CD4-positive, alpha-beta memory T cell (primary cell): ENCODE measurements at regions of chr10 and their contacts with region 1.

Region 1: GRCh38 chr10:32378363-32379317 is 31.7 kb upstream of the EPC1 start:
- DNase-seq: peak; percentile 88 to 97 (median 91)
- H3K4me3 ChIP-seq: peak overlapping the region; percentile 74 to 99
- H3K4me3 Mint-ChIP-seq: no peak overlapping the region
- H3K27ac ChIP-seq: peak overlapping the region; percentile 73
- H3K27ac Mint-ChIP-seq: no peak overlapping the region
- H3K4me1 ChIP-seq: peaks cover 34% of the 10 kb centered on the region
- H3K4me1 Mint-ChIP-seq: peaks cover 17 to 24% (median 19%) of the 10 kb centered on the region in 4 donors
- H3K27me3 ChIP-seq: no peaks in the 10 kb centered on the region
- H3K27me3 Mint-ChIP-seq: no peaks in the 10 kb centered on the region

Region 2: DNA sequence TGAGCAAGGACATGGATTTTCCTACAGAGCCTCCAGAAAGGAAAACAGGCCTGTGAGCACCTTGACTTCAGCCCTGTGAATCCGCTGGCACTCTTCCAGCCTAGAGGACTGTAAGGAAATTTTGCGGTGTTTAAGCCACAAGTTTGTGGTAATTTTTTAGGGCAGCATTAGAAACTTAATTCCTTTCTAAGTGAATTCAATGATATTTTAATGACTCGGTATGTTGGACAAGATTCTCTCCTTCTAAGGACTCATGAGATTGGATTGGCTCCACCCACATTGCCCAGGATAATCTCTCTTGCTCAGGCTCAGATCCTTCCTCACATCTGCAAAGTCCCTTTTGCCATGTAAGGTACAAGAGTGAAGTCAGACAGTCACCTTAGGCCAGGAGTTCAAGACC is 1753.6 kb before region 1 on chr10:
- CTCF ChIA-PET with region 1: no interaction called
- POLR2A ChIA-PET with region 1: no interaction called
- intact Hi-C with region 1: no loop called
- DNase-seq: no peak
- H3K4me3 ChIP-seq: no peak overlapping the region
- H3K4me3 Mint-ChIP-seq: no peak overlapping the region
- H3K27ac ChIP-seq: no peak overlapping the region
- H3K27ac Mint-ChIP-seq: no peak overlapping the region
- H3K4me1 ChIP-seq: no peaks in the 10 kb centered on the region
- H3K4me1 Mint-ChIP-seq: no peaks in the 10 kb centered on the region
- H3K27me3 ChIP-seq: no peaks in the 10 kb centered on the region
- H3K27me3 Mint-ChIP-seq: peaks cover 2 to 4% of the 10 kb centered on the region in 2 donors

Region 3: GRCh38 chr10:31759799-31760626 is 618.6 kb before region 1 on chr10:
- CTCF ChIA-PET with region 1: no interaction called
- POLR2A ChIA-PET with region 1: no interaction called
- intact Hi-C with region 1: loop called (anchors 5 kb)
- DNase-seq: peak; percentile 92 to 99 (median 97)
- H3K4me3 ChIP-seq: peak overlapping the region; percentile 66 to 90
- H3K4me3 Mint-ChIP-seq: peak overlapping the region; percentile 75 to 92 (median 86)
- H3K27ac ChIP-seq: peak overlapping the region; percentile 78
- H3K27ac Mint-ChIP-seq: peak overlapping the region; percentile 94 to 99 (median 99)
- H3K4me1 ChIP-seq: peaks cover 10% of the 10 kb centered on the region
- H3K4me1 Mint-ChIP-seq: peaks cover 9 to 17% (median 13%) of the 10 kb centered on the region in 4 donors
- H3K27me3 ChIP-seq: no peaks in the 10 kb centered on the region
- H3K27me3 Mint-ChIP-seq: no peaks in the 10 kb centered on the region

Region 4: GRCh38 chr10:32104622-32105509 is 273.8 kb before region 1 on chr10:
- CTCF ChIA-PET with region 1: no interaction called
- POLR2A ChIA-PET with region 1: no interaction called
- intact Hi-C with region 1: no loop called
- DNase-seq: no peak
- H3K4me3 ChIP-seq: no peak overlapping the region
- H3K4me3 Mint-ChIP-seq: peak overlapping the region in 1 of 8 donors; percentile 32
- H3K27ac ChIP-seq: no peak overlapping the region
- H3K27ac Mint-ChIP-seq: no peak overlapping the region
- H3K4me1 ChIP-seq: no peaks in the 10 kb centered on the region
- H3K4me1 Mint-ChIP-seq: no peaks in the 10 kb centered on the region
- H3K27me3 ChIP-seq: no peaks in the 10 kb centered on the region
- H3K27me3 Mint-ChIP-seq: peaks cover 5% of the 10 kb centered on the region in 2 donors

Region 5: DNA sequence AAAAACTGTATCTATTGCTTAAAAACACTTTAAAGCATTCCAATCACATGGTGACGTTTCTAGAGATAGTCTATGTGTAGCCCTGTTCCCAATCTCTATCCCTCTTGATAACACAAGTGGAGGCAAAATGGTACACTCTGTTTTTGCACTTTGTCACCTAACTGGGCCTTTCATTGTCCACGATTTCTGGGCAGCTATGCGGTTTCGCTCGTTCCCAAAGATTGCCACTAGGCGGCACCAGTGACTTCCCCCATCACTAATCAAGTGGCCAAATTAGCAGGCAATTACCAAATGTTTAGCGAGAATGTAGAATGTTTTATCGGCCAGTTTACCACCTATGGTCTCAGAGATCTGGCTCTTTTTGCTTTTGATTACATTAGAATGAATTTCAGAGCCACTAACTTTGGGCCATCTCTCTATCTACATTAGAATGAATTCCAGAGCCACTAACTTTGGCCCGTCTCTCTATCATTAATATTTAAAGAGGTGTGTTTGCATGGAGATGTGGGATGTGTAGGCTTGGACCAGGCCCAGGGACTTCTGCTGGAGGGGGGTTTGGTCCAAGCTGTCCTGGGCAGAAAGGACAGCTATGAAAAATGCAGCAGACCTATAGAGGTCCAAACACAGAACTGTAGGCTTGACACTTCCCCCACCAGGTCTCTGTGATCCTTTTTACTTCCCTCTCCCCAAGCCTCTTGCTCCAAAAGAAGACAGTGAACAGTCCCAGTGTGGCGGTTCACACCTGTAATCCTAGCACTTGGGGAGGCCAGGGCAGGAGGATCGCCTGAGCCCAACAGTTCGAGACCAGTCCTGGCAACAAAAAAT is 121.8 kb before region 1 on chr10:
- CTCF ChIA-PET with region 1: interaction called, 5 read pairs
- POLR2A ChIA-PET with region 1: interaction called, 11 read pairs
- intact Hi-C with region 1: no loop called
- DNase-seq: peak; percentile 62 to 67 (median 66)
- H3K4me3 ChIP-seq: no peak overlapping the region
- H3K4me3 Mint-ChIP-seq: peak overlapping the region in 3 of 8 donors; percentile 5 to 44 (median 20)
- H3K27ac ChIP-seq: no peak overlapping the region
- H3K27ac Mint-ChIP-seq: peak overlapping the region in 1 of 7 donors; percentile 46
- H3K4me1 ChIP-seq: peaks cover 7% of the 10 kb centered on the region
- H3K4me1 Mint-ChIP-seq: peaks cover 5 to 10% (median 7%) of the 10 kb centered on the region in 4 donors
- H3K27me3 ChIP-seq: no peaks in the 10 kb centered on the region
- H3K27me3 Mint-ChIP-seq: no peaks in the 10 kb centered on the region

Region 6: GRCh38 chr10:32367793-32368453 is 10.7 kb before region 1 on chr10:
- CTCF ChIA-PET with region 1: interaction called, 43 read pairs
- POLR2A ChIA-PET with region 1: interaction called, 16 read pairs
- intact Hi-C with region 1: loop called (anchors 1 kb)
- DNase-seq: peak; percentile 72 to 77 (median 75)
- H3K4me3 ChIP-seq: no peak overlapping the region
- H3K4me3 Mint-ChIP-seq: peak overlapping the region in 7 of 8 donors; percentile 31 to 76 (median 70)
- H3K27ac ChIP-seq: peak overlapping the region; percentile 33
- H3K27ac Mint-ChIP-seq: peak overlapping the region; percentile 62 to 92 (median 84)
- H3K4me1 ChIP-seq: peaks cover 83% of the 10 kb centered on the region
- H3K4me1 Mint-ChIP-seq: peaks cover 47 to 84% (median 64%) of the 10 kb centered on the region in 4 donors
- H3K27me3 ChIP-seq: no peaks in the 10 kb centered on the region
- H3K27me3 Mint-ChIP-seq: no peaks in the 10 kb centered on the region

Region 7: DNA sequence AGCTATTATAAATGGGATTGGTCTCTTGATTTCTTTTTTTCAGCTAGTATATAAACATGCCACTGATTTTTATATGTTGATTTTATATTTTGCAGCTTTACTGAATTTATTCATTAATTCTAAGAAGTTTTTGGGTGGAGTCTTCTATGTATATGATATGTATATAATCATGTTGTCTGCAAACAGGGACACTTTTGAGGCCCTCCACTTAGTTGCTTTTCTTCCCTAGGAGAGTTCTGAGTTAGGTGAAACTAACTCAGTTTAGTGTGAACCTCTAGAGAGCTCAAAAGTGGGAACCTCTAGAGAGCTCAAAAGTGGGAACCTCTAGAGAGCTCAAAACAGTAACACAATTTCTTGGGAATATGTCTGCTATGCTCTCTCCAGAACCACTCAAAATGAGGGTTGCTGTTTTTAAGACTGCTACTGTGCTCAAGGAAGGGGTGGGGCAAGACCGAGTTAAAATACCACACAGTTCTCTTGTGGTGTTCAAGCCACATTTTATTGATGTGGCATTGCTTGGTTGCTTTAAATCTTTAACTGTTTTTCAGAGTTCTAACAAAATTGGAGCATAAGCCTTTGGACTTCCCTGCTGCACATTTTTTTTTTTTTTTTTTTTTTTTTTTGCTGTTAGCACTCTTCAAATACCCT is 80.5 kb after region 1 on chr10:
- CTCF ChIA-PET with region 1: interaction called, 8 read pairs
- POLR2A ChIA-PET with region 1: interaction called, 28 read pairs
- intact Hi-C with region 1: loop called (anchors 1 kb)
- DNase-seq: peak; percentile 81 to 85 (median 82)
- H3K4me3 ChIP-seq: no peak overlapping the region
- H3K4me3 Mint-ChIP-seq: peak overlapping the region; percentile 27 to 81 (median 68)
- H3K27ac ChIP-seq: peak overlapping the region; percentile 62
- H3K27ac Mint-ChIP-seq: peak overlapping the region; percentile 48 to 93 (median 83)
- H3K4me1 ChIP-seq: peaks cover 43% of the 10 kb centered on the region
- H3K4me1 Mint-ChIP-seq: peaks cover 34 to 53% (median 49%) of the 10 kb centered on the region in 4 donors
- H3K27me3 ChIP-seq: no peaks in the 10 kb centered on the region
- H3K27me3 Mint-ChIP-seq: no peaks in the 10 kb centered on the region

Region 8: DNA sequence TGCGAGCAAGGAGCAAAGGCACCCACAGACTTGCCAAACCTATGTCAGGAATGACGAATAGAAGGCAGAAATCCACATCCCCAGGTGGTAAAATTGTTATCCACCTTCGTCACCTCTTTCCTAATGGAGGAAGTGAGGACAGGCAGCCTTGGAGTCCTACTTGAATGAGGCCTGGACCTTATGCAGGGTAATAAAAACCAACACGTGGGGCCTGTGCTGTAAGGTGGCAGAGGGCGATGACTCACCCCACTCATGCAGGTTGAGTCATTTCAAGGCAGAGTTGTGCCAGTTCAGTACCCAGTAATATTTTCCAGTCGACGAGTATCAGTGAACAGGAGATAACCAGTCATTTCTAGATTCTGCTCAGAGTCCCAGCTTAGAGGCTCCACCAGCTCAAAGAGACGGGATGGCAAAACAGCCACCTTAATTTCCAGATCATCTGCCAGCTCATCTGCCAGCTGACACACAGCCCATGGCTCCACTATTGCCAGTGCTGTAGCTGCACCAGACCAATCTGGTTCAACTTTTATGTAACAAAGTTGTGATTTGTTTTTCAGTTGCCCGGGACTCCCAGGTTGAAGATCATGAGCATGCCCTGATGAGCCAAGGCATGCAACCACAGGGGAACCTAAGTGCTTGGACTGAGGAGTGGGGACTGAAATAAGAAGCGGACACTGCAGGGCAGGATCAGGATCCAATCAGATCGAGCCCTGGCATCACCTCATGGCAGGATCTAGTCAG is 755.5 kb after region 1 on chr10:
- CTCF ChIA-PET with region 1: no interaction called
- POLR2A ChIA-PET with region 1: interaction called, 13 read pairs
- intact Hi-C with region 1: loop called (anchors 5 kb)
- DNase-seq: peak; percentile 59 to 96 (median 73)
- H3K4me3 ChIP-seq: no peak overlapping the region
- H3K4me3 Mint-ChIP-seq: peak overlapping the region; percentile 13 to 84 (median 62)
- H3K27ac ChIP-seq: peak overlapping the region; percentile 84
- H3K27ac Mint-ChIP-seq: peak overlapping the region; percentile 89 to 100 (median 100)
- H3K4me1 ChIP-seq: peaks cover 98% of the 10 kb centered on the region
- H3K4me1 Mint-ChIP-seq: peaks cover 71 to 97% (median 85%) of the 10 kb centered on the region in 4 donors
- H3K27me3 ChIP-seq: no peaks in the 10 kb centered on the region
- H3K27me3 Mint-ChIP-seq: no peaks in the 10 kb centered on the region

Region 9: GRCh38 chr10:33155720-33156638 is 777.3 kb after region 1 on chr10:
- CTCF ChIA-PET with region 1: interaction called, 3 read pairs
- POLR2A ChIA-PET with region 1: interaction called, 12 read pairs
- intact Hi-C with region 1: no loop called
- DNase-seq: peak; percentile 59 to 71 (median 67)
- H3K4me3 ChIP-seq: no peak overlapping the region
- H3K4me3 Mint-ChIP-seq: peak overlapping the region in 6 of 8 donors; percentile 3 to 79 (median 50)
- H3K27ac ChIP-seq: no peak overlapping the region
- H3K27ac Mint-ChIP-seq: peak overlapping the region; percentile 21 to 98 (median 84)
- H3K4me1 ChIP-seq: peaks cover 53% of the 10 kb centered on the region
- H3K4me1 Mint-ChIP-seq: peaks cover 35 to 54% (median 48%) of the 10 kb centered on the region in 4 donors
- H3K27me3 ChIP-seq: no peaks in the 10 kb centered on the region
- H3K27me3 Mint-ChIP-seq: no peaks in the 10 kb centered on the region